ENCODE measurements at regions of chr4 and their contacts with region 1.

Region 1: DNA sequence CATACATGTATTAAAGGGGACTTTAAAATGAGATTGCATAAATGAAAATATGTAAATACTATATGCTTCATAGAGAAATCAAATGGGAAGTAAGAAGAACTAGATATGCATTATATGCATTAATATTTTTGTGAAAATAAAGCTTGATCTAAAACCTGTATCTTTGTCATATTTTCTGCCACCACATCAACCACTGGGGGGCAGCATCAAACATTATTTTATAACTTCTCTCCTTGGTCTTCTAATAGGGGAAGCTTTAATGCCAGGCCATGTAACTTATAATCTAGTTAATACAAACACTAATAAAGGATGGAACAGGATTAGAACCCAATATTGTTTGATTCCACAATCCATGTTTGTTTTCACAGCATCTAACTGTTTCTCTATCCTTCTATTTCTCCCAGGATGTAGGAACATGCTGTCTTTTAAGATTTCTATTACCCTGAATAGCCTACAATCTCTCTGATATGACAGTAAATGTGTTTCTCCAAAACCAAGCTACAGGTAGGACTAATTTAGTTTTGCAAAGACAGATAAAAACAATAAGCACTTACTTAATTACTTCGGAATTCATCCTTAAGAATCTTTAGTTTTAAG is 10.0 kb downstream of the QRFPR start:
- DNase-seq: no peak
- H3K4me3 ChIP-seq: no peak overlapping the region
- H3K27ac ChIP-seq: no peak overlapping the region
- H3K4me1 ChIP-seq: no peaks in the 10 kb centered on the region
- H3K27me3 ChIP-seq: no peaks in the 10 kb centered on the region
- CTCF ChIP-seq: peak in 3 of 4 experiments; percentile 34 to 61 (median 34)
- EP300 ChIP-seq: no peak
- POLR2A ChIP-seq: no peak

Region 2: DNA sequence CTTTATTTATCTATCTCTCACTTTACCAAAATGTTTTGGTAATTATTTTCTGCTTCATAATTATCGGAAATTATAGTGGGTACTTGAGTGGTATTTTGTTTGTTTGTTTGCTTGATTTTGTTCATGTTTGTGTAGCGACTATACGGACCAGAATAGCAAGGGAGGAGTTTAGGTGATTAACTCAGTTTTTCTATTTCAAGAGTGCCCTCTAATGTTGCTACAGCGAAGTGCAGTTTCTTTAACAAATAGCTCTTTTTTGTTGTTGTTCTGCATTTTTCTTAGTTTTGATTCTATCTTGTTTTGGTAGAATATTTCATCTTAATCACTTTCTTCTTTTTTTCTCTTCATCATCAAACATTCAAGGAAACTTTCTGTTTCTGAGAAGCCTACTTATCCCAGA is 50.8 kb after region 1 on chr4:
- intact Hi-C with region 1: loop called (anchors 1 kb)
- DNase-seq: no peak
- H3K4me3 ChIP-seq: no peak overlapping the region
- H3K27ac ChIP-seq: no peak overlapping the region
- H3K4me1 ChIP-seq: no peaks in the 10 kb centered on the region
- H3K27me3 ChIP-seq: no peaks in the 10 kb centered on the region
- CTCF ChIP-seq: peak; percentile 21 to 48 (median 40)
- EP300 ChIP-seq: no peak
- POLR2A ChIP-seq: no peak

Region 3: DNA sequence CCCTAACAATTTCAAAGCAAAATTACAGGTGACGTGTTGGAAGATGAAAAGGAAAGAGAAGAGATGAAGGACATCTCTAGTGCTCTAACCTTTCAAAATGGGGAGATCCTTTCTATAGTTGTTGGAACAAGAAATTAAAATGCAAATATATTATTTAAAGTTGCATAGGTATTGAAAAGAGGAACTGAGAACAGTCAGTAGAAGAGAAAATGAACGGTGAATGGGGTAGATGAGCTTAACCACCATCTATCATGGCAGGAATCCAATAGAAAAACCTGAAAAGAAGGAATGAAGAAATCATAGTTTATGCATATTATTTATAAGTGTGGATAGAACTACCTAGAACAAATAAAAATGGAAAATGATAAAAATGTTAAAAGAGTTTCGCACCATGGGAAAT is 283.9 kb after region 1 on chr4:
- intact Hi-C with region 1: loop called (anchors 2 kb)
- DNase-seq: no peak
- H3K4me3 ChIP-seq: no peak overlapping the region
- H3K27ac ChIP-seq: no peak overlapping the region
- H3K4me1 ChIP-seq: no peaks in the 10 kb centered on the region
- H3K27me3 ChIP-seq: no peaks in the 10 kb centered on the region
- CTCF ChIP-seq: no peak
- EP300 ChIP-seq: no peak
- POLR2A ChIP-seq: no peak

Region 4: DNA sequence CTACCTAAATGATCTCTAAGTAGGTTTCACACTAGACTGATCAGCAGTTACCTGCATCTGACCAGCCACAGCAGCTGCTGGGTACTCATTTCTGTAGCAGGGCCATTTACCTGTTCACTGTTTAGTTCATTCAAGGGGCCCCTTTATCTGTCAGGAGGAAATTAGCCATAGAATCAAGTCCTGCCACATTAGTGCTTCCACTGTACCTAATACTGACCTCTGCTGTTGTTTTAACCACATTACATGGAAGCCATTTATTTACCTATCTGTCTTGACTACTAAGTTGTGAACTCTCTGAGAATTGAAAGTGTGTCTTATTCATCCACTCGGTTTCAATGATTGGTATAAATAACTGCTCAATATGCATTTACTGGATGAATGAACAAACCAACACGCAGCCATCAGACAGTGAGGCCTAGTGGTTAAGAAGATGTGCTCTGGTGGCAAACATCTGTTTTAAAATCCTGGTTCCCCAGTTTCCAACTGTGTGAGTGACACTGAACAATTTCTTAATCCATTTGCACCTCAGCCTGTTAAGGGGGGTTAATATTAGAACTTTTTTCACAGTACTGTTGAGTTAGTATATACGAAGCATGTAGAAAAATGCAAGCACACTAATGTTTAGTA is 355.9 kb after region 1 on chr4:
- intact Hi-C with region 1: loop called (anchors 5 kb)
- DNase-seq: no peak
- H3K4me3 ChIP-seq: no peak overlapping the region
- H3K27ac ChIP-seq: no peak overlapping the region
- H3K4me1 ChIP-seq: peaks cover 0 to 2% (median 0%) of the 10 kb centered on the region in 4 donors
- H3K27me3 ChIP-seq: no peaks in the 10 kb centered on the region
- CTCF ChIP-seq: peak; percentile 30 to 70 (median 52)
- EP300 ChIP-seq: no peak
- POLR2A ChIP-seq: no peak

Measured in sigmoid colon (tissue), 7 donors.